Esophagus squamous epithelium (tissue), 5 donors: ENCODE measurements at regions of chr17 and their contacts with region 1.

Region 1: GRCh38 chr17:80426681-80427326 is 11.8 kb downstream of the ENDOV start:
- DNase-seq: no peak
- H3K4me3 ChIP-seq: no peak overlapping the region
- H3K27ac ChIP-seq: no peak overlapping the region
- H3K4me1 ChIP-seq: peaks cover 8 to 34% (median 8%) of the 10 kb centered on the region in 3 donors
- H3K27me3 ChIP-seq: no peaks in the 10 kb centered on the region
- CTCF ChIP-seq: peak; percentile 91 to 98 (median 96)
- POLR2A ChIP-seq: no peak

Region 2: DNA sequence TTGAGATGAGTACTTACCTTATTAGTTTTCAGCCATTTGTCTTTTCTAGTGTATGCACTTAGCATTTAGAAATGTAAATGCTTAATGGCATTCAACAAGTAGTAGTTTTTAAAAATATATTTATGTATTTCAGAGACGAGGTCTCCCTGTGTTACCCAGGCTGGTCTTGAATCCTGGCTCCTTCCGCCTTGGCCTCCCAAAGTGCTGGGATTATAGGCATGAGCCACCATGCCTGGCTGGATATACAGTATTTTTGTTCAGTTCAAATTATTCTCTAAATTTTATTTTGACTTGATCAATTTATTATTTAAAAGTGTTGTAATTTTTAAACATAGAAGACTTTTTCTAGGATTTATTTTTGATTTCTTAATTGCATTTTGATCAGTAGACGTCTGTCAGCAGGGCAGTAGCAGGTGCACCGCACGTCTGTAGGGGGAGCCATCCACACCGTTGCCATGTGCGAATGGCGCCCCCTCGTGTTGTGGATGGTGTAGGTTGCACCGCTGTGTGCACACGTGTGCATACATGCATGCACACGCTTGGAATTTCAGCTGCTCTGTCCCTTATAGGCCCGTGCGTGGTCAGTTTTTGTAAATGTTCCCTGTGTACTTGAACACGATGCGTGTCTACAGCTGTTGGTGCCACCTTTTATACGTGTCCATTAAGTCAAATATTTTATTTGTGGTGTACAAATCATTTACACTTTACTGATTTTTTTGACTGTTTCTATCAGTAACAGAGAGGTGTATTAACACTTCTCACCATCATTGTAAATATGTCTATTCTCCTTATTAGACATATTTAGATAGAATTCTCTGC is 148.5 kb after region 1 on chr17:
- intact Hi-C with region 1: loop called (anchors 10 kb)
- DNase-seq: peak; percentile 17
- H3K4me3 ChIP-seq: no peak overlapping the region
- H3K27ac ChIP-seq: no peak overlapping the region
- H3K4me1 ChIP-seq: peaks cover 0 to 13% (median 0%) of the 10 kb centered on the region in 3 donors
- H3K27me3 ChIP-seq: no peaks in the 10 kb centered on the region
- CTCF ChIP-seq: peak; percentile 92 to 100 (median 96)
- POLR2A ChIP-seq: no peak

Region 3: GRCh38 chr17:80970044-80970761 is 543.4 kb after region 1 on chr17:
- intact Hi-C with region 1: loop called (anchors 5 kb)
- DNase-seq: no peak
- H3K4me3 ChIP-seq: no peak overlapping the region
- H3K27ac ChIP-seq: peak overlapping the region in 2 of 4 donors; percentile 70 to 74
- H3K4me1 ChIP-seq: peaks cover 4 to 40% (median 26%) of the 10 kb centered on the region in 3 donors
- H3K27me3 ChIP-seq: peaks cover 0 to 48% (median 3%) of the 10 kb centered on the region in 4 donors
- CTCF ChIP-seq: peak in 5 of 6 experiments; percentile 27 to 55 (median 34)
- POLR2A ChIP-seq: no peak